ENCODE measurements at regions of chr16 and their contacts with region 1.

Region 1: DNA sequence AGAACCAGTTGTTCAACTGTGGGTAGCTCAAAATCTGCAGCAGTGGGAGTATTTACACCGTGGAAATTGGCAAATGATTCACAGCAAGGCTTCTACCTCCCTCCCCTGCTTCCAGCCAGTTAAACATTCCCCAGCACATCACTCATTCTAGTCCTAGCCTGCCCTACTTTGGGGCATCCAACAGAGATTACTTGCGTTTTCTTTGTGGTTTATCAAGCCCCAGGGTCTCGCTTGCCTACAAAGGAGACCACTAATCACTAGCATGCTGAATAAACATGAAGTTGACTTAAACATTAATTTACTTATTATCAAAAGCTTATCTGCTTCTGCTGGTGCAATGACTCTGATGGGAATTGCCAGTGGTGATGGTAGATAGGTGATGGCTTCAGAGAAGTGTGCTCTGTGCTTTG is 94.5 kb downstream of the MARF1 start:
- DNase-seq: no peak
- H3K4me3 ChIP-seq: no peak overlapping the region
- H3K27me3 ChIP-seq: no peaks in the 10 kb centered on the region
- CTCF ChIP-seq: no peak

Region 2: DNA sequence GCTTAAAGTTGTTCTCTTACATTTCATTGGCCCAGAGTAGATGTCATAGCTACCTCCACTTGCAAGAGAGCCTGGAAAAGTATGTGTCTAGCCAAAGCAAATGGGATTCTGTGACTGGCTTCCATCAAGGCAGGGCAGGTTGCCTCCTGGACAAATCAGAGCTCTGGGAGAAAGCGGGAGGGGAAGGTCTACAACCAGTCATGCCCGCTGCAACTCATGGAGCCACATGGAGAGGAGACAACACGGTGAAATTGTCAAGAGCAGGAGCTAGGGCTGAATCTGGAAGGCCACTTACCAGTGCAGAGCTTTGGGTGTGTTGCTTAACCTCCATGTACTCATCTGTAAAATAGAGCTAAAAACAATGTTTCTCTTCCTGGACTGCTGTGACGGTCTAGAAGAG is 10.7 kb after region 1 on chr16:
- CTCF ChIA-PET with region 1: interaction called, 29 read pairs
- POLR2A ChIA-PET with region 1: no interaction called
- DNase-seq: no peak
- H3K4me3 ChIP-seq: no peak overlapping the region
- H3K27me3 ChIP-seq: no peaks in the 10 kb centered on the region
- CTCF ChIP-seq: no peak

Region 3: GRCh38 chr16:15564604-15565339 is 16.3 kb after region 1 on chr16:
- CTCF ChIA-PET with region 1: interaction called, 29 read pairs
- POLR2A ChIA-PET with region 1: no interaction called
- DNase-seq: no peak
- H3K4me3 ChIP-seq: no peak overlapping the region
- H3K27me3 ChIP-seq: no peaks in the 10 kb centered on the region
- CTCF ChIP-seq: no peak

Region 4: GRCh38 chr16:15643048-15643945 is 94.8 kb after region 1 on chr16 and contains the start of gene MARF1:
- CTCF ChIA-PET with region 1: no interaction called
- POLR2A ChIA-PET with region 1: no interaction called
- DNase-seq: peak; percentile 46
- H3K4me3 ChIP-seq: peak within 1 kb of the TSS; percentile 99
- H3K27me3 ChIP-seq: no peaks in the 10 kb centered on the region
- CTCF ChIP-seq: peak; percentile 59
- polyA plus RNA-seq, gene MARF1: 22.5 and 25.2 TPM in 2 replicates

Measured in BJ (cell line).